ENCODE measurements at regions of chr9 and their contacts with region 1.

Region 1: DNA sequence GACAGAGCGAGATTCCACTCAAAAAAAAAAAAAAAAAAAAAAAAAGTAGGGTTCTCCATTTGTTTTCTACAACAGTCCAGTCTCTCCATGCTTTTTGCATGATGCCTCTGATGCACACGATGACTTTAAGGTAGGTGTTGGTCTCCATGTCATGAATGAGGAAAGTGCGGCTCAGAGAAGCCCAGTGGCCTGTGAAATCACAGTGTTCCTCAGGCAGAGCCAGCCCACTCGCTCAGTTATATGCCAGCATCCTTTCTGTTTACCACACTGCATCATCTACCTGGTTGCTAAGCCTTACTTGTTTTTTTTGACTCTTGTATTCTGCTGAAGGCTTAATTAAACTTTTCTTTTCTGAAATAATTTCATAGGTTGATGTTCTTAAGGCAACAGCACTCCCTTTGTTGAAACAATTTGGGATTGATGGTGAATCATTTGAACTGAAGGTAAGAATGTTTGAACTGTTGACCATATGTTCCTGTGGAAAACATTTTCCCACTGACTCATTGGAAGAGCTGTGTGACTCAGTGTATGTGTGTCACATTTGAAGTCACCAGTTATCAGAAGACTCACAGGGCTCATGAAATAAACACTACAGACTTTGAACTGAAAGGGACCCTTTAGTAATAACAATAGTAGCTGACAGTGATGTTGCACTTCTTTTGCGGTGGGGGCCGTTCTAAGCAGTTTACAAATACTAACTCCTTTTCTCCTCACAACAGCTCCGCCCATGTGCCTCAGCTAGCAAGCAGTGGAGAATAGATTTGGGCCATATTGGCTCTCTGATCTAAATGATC is 40.2 kb downstream of the RCL1 start:
- DNase-seq: peak; percentile 78
- H3K4me3 Mint-ChIP-seq: peak overlapping the region; percentile 55
- H3K27ac Mint-ChIP-seq: peak overlapping the region; percentile 94
- H3K4me1 Mint-ChIP-seq: peaks cover 52% of the 10 kb centered on the region
- H3K27me3 Mint-ChIP-seq: no peaks in the 10 kb centered on the region

Region 2: DNA sequence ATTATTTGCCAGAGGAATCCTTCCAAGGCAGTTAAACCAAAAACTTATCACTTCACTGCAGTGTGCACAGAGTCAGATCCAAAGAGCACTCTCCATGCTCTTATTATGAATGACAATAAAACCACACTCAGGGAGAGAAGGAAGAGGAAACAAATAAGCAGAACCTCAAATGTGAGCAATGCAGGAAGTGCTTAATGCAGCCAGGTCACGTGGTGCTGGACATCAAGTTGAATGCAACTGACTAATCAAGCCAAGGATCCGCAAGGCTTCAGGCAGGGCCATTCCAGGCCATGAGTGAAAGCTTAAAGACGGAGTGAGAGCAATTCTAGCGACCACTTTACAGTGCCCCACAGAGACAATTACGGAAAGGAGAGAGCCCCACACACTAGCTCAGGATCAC is 1758.7 kb before region 1 on chr9:
- intact Hi-C with region 1: no loop called
- DNase-seq: no peak
- H3K4me3 Mint-ChIP-seq: no peak overlapping the region
- H3K27ac Mint-ChIP-seq: no peak overlapping the region
- H3K4me1 Mint-ChIP-seq: no peaks in the 10 kb centered on the region
- H3K27me3 Mint-ChIP-seq: no peaks in the 10 kb centered on the region

Region 3: DNA sequence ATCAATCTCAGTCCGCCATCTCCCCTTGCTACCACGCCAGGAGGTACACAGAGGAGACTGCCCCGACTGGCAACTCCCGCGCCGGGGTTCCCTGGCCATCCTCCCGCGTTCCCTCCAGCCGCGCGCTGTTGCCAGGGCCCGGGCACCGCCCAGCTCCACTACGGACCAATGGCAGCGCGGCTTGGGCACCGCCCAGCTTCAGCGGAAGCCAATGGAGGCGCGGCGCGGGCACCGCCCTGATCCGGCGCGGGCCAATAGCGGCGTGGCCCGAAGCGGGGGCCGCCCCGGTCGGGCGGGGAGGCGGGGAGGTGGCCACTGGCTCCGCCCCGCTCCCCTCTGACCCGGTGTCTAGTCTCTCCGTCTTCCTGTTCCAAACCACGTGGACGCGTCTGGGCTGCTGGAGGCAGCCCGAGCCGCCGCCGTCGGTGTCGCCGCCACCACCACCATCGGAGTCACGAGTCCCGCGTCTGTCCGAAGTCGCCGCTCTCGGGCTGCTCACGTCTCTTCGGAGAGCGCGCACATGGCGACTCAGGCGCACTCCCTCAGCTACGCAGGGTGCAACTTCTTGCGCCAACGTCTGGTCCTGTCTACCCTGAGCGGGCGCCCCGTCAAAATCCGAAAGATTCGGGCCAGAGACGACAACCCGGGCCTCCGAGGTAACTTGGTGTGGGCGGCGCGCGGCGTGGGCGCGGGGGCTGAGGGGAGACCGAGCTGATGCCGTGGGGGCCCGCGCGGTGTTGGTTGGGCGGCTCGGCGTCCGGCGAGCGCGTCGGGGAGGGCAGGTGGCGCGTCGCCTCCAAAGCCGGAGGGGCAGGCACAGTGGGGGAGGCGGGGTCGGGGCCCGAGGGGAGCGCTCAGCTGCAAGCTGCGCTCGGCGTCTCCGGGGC is 40.2 kb before region 1 on chr9 and contains the start of gene RCL1:
- intact Hi-C with region 1: loop called (anchors 1 kb)
- DNase-seq: peak; percentile 100
- H3K4me3 Mint-ChIP-seq: peak within 1 kb of the TSS; percentile 82
- H3K27ac Mint-ChIP-seq: peak within 1 kb of the TSS; percentile 95
- H3K4me1 Mint-ChIP-seq: peaks cover 51% of the 10 kb centered on the region
- H3K27me3 Mint-ChIP-seq: peaks cover 9% of the 10 kb centered on the region
- total RNA-seq, gene RCL1: 44.1 and 44.6 TPM in 2 replicates

Region 4: GRCh38 chr9:4866239-4866969 is 33.4 kb after region 1 on chr9:
- intact Hi-C with region 1: loop called (anchors 1 kb)
- DNase-seq: peak; percentile 67
- H3K4me3 Mint-ChIP-seq: peak overlapping the region; percentile 35
- H3K27ac Mint-ChIP-seq: peak overlapping the region; percentile 81
- H3K4me1 Mint-ChIP-seq: peaks cover 32% of the 10 kb centered on the region
- H3K27me3 Mint-ChIP-seq: no peaks in the 10 kb centered on the region

Region 5: DNA sequence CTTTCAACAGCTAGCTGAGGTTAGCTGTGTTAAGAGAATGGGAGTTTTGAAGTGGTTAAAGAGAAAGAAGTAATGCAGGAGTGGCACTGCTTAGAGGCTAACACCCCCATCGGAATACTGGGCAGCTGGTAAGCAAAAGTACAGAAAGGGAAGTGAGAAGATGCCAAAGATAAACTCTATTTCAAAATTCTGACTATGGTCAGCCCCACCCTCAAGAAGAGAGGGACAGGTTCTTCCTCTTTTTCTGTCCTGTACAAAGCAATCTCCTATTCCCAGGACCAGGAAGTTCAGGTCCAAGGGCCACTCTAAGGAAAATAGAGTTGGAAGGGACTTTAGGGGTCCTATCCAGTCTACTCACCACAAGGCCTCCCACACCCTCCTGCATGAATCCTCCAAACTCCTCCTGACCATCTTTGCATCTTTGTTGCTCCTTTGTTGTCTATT is 106.2 kb after region 1 on chr9:
- intact Hi-C with region 1: loop called (anchors 1 kb)
- DNase-seq: peak; percentile 83
- H3K4me3 Mint-ChIP-seq: peak overlapping the region; percentile 40
- H3K27ac Mint-ChIP-seq: peak overlapping the region; percentile 92
- H3K4me1 Mint-ChIP-seq: peaks cover 67% of the 10 kb centered on the region
- H3K27me3 Mint-ChIP-seq: no peaks in the 10 kb centered on the region

Region 6: DNA sequence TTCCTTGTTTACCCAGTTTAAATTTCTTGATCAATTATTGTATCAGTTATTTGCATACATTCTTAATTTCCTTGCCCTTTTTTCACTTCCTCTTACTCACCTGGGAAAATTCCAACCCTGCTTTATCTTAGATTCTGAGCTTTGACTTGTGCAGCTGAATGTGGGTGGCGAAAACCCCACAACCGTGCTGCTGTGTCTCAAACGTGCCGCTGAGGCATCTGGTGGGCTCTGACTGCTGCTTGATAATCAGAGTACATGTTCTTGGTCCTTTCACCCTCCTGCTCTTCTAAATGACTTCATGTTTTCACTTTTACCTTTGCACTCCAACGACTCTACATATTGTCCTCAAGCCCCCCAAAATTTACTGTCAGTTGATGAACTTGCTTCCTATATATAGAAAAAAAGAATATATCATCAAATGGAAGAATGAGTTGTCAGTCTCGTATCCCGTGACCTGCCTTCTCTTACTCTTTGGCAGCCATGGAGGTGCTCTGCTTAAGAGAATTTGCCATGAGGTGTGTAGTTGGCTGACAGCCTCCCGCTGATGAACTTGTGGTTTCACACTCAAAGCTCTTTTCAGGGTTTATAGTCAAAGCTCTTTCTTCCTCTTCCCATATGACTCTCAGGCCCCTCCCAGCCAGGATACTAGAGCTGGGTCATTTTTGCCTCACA is 138.1 kb after region 1 on chr9:
- intact Hi-C with region 1: loop called (anchors 1 kb)
- DNase-seq: peak; percentile 88
- H3K4me3 Mint-ChIP-seq: no peak overlapping the region
- H3K27ac Mint-ChIP-seq: no peak overlapping the region
- H3K4me1 Mint-ChIP-seq: peaks cover 20% of the 10 kb centered on the region
- H3K27me3 Mint-ChIP-seq: no peaks in the 10 kb centered on the region

Region 7: GRCh38 chr9:5450359-5451091 is 617.5 kb after region 1 on chr9 and contains the start of gene CD274:
- intact Hi-C with region 1: loop called (anchors 5 kb)
- DNase-seq: peak; percentile 95
- H3K4me3 Mint-ChIP-seq: peak within 1 kb of the TSS; percentile 90
- H3K27ac Mint-ChIP-seq: peak within 1 kb of the TSS; percentile 90
- H3K4me1 Mint-ChIP-seq: peaks cover 56% of the 10 kb centered on the region
- H3K27me3 Mint-ChIP-seq: no peaks in the 10 kb centered on the region
- total RNA-seq, gene CD274: 52.1 and 57.6 TPM in 2 replicates

Region 8: GRCh38 chr9:5510360-5510931 is 677.5 kb after region 1 on chr9 and contains the start of gene PDCD1LG2:
- intact Hi-C with region 1: loop called (anchors 1 kb)
- DNase-seq: peak; percentile 83
- H3K4me3 Mint-ChIP-seq: peak within 1 kb of the TSS; percentile 85
- H3K27ac Mint-ChIP-seq: peak within 1 kb of the TSS; percentile 96
- H3K4me1 Mint-ChIP-seq: peaks cover 53% of the 10 kb centered on the region
- H3K27me3 Mint-ChIP-seq: peaks cover 2% of the 10 kb centered on the region
- total RNA-seq, gene PDCD1LG2: 1.3 and 1.5 TPM in 2 replicates

Measured in activated CD4-positive, alpha-beta T cell treated with anti-CD3 and anti-CD28 coated beads, Interleukin-2, amount 10 ng/mL, durations not matched to agents 24 days and 14 days (primary cell).